Activated CD8-positive, alpha-beta T cell treated with anti-CD3 and anti-CD28 coated beads, Interleukin-2, amount 10 ng/mL, durations not matched to agents 7 days and 5 days (primary cell): ENCODE measurements at regions of chr5 and their contacts with region 1.

Region 1: GRCh38 chr5:138352071-138352721 is at the start of gene KDM3B:
- DNase-seq: peak; percentile 90
- ATAC-seq: peak; percentile 73
- H3K4me3 Mint-ChIP-seq: peak within 1 kb of the TSS; percentile 94
- H3K27ac Mint-ChIP-seq: peak within 1 kb of the TSS; percentile 96
- H3K4me1 Mint-ChIP-seq: peaks cover 45% of the 10 kb centered on the region
- H3K27me3 Mint-ChIP-seq: no peaks in the 10 kb centered on the region
- total RNA-seq, gene KDM3B: 53.1 to 55.0 TPM

Region 2: GRCh38 chr5:137975208-137975607 is 377.0 kb before region 1 on chr5:
- CTCF ChIA-PET with region 1: no interaction called
- POLR2A ChIA-PET with region 1: no interaction called
- DNase-seq: no peak
- ATAC-seq: no peak
- H3K4me3 Mint-ChIP-seq: no peak overlapping the region
- H3K27ac Mint-ChIP-seq: no peak overlapping the region
- H3K4me1 Mint-ChIP-seq: no peaks in the 10 kb centered on the region
- H3K27me3 Mint-ChIP-seq: no peaks in the 10 kb centered on the region

Region 3: GRCh38 chr5:138188626-138189025 is 163.6 kb before region 1 on chr5:
- CTCF ChIA-PET with region 1: interaction called, 17 read pairs
- POLR2A ChIA-PET with region 1: no interaction called
- DNase-seq: no peak
- ATAC-seq: no peak
- H3K4me3 Mint-ChIP-seq: no peak overlapping the region
- H3K27ac Mint-ChIP-seq: no peak overlapping the region
- H3K4me1 Mint-ChIP-seq: peaks cover 5% of the 10 kb centered on the region
- H3K27me3 Mint-ChIP-seq: no peaks in the 10 kb centered on the region

Region 4: DNA sequence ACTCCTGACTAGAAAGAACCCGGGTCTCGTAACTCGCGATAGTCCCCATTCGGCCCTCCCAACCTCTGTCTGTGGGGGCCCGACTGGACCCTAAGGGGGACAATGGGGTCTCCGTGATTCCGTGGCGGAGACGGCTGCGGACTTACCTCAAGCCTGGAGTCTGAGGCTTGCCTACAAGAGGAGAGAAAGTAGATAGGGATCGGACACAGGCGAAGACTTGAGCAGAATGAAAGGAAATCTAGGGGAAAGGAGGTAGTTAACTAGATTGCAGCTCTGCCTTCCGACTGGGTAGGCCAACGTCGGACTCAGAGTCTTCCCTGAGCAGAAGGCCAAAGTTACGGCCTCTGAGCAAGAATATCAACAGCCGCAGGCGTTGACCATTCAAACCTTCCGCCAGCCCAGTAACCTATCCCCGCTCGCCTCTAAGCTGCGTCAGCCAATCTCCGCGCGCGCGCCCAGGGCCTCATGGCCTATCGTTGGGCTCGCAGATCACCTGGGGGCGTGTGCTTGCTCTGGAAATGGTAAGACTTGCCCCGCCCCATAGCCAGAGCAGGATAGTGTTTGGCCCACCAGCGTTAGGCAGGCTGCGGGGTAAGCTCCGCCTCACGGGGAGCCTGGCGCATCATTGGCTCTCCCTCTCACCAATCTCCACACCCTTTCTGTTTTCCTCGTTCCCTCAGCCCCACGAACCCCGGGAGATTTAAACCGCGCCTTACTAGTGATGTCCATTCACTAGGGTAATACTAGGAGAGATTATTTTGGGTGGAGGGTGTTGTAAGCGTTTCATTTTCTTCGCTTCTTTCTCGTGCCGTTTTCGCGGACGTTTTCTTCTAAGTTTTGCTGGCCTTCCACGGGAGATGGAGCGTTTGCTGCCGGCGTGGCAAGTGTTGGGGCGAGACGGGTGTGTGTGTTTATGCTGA is 20.5 kb before region 1 on chr5 and contains the start of gene CDC25C:
- CTCF ChIA-PET with region 1: interaction called, 430 read pairs
- POLR2A ChIA-PET with region 1: interaction called, 113 read pairs
- DNase-seq: peak; percentile 99
- ATAC-seq: peak; percentile 100
- H3K4me3 Mint-ChIP-seq: peak within 1 kb of the TSS; percentile 78
- H3K27ac Mint-ChIP-seq: peak within 1 kb of the TSS; percentile 86
- H3K4me1 Mint-ChIP-seq: peaks cover 27% of the 10 kb centered on the region
- H3K27me3 Mint-ChIP-seq: no peaks in the 10 kb centered on the region
- total RNA-seq, gene CDC25C: 15.0 to 18.3 TPM

Region 5: GRCh38 chr5:138369706-138370105 is 17.5 kb after region 1 on chr5:
- CTCF ChIA-PET with region 1: interaction called, 89 read pairs
- POLR2A ChIA-PET with region 1: interaction called, 10 read pairs
- DNase-seq: no peak
- ATAC-seq: no peak
- H3K4me3 Mint-ChIP-seq: no peak overlapping the region
- H3K27ac Mint-ChIP-seq: no peak overlapping the region
- H3K4me1 Mint-ChIP-seq: peaks cover 5% of the 10 kb centered on the region
- H3K27me3 Mint-ChIP-seq: no peaks in the 10 kb centered on the region

Region 6: DNA sequence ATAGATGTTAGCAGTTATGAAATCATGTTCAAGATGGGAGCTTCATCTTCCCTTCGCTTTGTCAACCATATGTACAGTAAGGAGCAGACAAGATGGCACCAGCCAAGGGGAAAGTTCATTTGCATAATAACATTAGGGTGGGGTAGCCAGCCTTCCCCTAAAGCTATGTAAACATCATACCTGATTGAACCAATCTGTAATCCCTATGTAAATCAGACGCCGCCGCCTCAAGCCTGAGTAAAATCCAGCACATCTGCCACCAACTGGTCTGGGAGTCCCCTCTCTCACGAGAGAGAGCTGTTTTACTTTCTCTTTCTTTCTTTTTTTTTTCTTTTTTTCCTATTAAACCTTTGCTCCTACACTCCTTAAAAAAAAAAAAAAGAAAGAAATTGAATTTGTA is 55.8 kb after region 1 on chr5:
- CTCF ChIA-PET with region 1: interaction called, 102 read pairs
- POLR2A ChIA-PET with region 1: interaction called, 5 read pairs
- DNase-seq: peak; percentile 51
- ATAC-seq: peak; percentile 65
- H3K4me3 Mint-ChIP-seq: no peak overlapping the region
- H3K27ac Mint-ChIP-seq: peak overlapping the region; percentile 17
- H3K4me1 Mint-ChIP-seq: peaks cover 13% of the 10 kb centered on the region
- H3K27me3 Mint-ChIP-seq: no peaks in the 10 kb centered on the region

Region 7: DNA sequence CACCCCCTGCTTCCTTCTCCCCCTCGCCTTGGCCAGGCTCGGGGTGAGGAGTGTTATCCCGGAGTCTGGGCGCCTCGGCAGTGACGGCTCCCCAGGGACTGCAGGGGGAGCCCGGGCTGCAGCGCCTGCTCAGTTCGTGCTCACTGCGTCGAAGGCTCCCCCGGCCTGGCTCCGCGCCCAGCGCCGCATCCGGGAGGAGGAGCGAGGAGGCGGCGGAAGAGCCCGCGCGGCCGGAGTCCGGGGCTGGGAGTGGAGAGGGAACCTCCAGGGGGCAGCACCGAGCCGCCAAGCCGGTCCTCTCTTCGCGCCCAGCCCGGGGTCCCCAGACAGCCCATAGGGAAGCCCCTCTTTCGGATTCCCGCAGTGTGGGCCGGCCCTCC is 111.8 kb after region 1 on chr5:
- CTCF ChIA-PET with region 1: interaction called, 19 read pairs
- POLR2A ChIA-PET with region 1: interaction called, 5 read pairs
- DNase-seq: peak; percentile 93
- ATAC-seq: peak; percentile 52
- H3K4me3 Mint-ChIP-seq: peak overlapping the region; percentile 87
- H3K27ac Mint-ChIP-seq: peak overlapping the region; percentile 96
- H3K4me1 Mint-ChIP-seq: peaks cover 42% of the 10 kb centered on the region
- H3K27me3 Mint-ChIP-seq: peaks cover 20% of the 10 kb centered on the region